PC-9 (cell line): ENCODE measurements at regions of chr7 and their contacts with region 1.

Region 1: GRCh38 chr7:29420011-29420410 is 143.6 kb upstream of the PRR15 start:
- DNase-seq: no peak
- H3K4me3 ChIP-seq: no peak overlapping the region
- H3K27ac ChIP-seq: no peak overlapping the region
- H3K4me1 ChIP-seq: no peaks in the 10 kb centered on the region
- H3K27me3 ChIP-seq: no peaks in the 10 kb centered on the region
- CTCF ChIP-seq: no peak

Region 2: GRCh38 chr7:29471444-29472138 is 51.6 kb after region 1 on chr7:
- CTCF ChIA-PET with region 1: no interaction called
- POLR2A ChIA-PET with region 1: interaction called, 19 read pairs
- intact Hi-C with region 1: no loop called
- DNase-seq: no peak
- H3K4me3 ChIP-seq: no peak overlapping the region
- H3K27ac ChIP-seq: no peak overlapping the region
- H3K4me1 ChIP-seq: no peaks in the 10 kb centered on the region
- H3K27me3 ChIP-seq: no peaks in the 10 kb centered on the region
- CTCF ChIP-seq: no peak